Psoas muscle (tissue), 8 donors: ENCODE measurements at regions of chr2 and their contacts with region 1.

Region 1: DNA sequence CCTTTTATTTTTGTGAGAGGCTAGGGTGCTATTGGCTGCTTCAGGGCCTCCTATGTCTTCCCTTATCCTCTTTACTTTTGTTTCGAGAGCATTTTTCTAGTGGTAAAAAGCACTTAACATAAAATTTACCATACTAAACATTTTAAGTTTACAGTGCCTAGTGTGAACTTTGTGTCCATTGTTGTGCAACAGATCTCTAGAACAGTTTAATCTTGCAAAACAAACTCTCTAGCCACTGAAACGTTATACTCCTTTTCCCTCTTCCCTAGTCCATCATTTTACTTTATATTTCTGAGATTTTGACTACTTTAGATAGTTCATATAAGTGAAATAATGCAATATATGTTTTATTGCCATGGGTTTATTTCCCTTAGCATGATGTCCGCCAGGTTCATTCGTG is 580.6 kb downstream of the THSD7B start:
- DNase-seq: no peak
- ATAC-seq: no peak
- H3K4me3 ChIP-seq: no peak overlapping the region
- H3K27ac ChIP-seq: no peak overlapping the region
- H3K4me1 ChIP-seq: no peaks in the 10 kb centered on the region
- H3K27me3 ChIP-seq: no peaks in the 10 kb centered on the region
- CTCF ChIP-seq: no peak

Region 2: GRCh38 chr2:137357634-137358033 is 11.6 kb after region 1 on chr2:
- intact Hi-C with region 1: loop called in 1 of 2 experiments (anchors 2 kb)
- DNase-seq: no peak
- ATAC-seq: no peak
- H3K4me3 ChIP-seq: no peak overlapping the region
- H3K27ac ChIP-seq: no peak overlapping the region
- H3K4me1 ChIP-seq: no peaks in the 10 kb centered on the region
- H3K27me3 ChIP-seq: no peaks in the 10 kb centered on the region
- CTCF ChIP-seq: no peak

Region 3: DNA sequence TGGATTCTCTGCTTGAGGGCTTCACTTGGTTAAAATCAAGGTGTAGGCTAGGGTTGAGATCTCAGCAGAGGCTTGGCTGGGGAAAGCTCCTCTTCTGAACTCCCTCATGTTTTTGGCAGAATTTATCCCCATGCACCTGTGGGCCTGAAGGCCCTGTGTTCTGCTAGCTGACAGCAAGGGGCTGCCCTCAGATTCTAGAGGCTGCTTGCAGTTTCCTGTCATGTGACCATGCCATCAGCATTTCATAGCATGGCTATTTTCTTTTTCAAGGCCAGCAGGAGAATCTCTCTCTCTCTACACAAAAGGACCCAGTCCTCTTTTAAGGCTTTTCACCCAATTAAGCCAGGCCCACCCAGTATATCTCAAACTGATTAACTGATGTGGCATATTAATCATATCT is 103.5 kb after region 1 on chr2:
- intact Hi-C with region 1: no loop called
- DNase-seq: no peak
- ATAC-seq: no peak
- H3K4me3 ChIP-seq: no peak overlapping the region
- H3K27ac ChIP-seq: no peak overlapping the region
- H3K4me1 ChIP-seq: no peaks in the 10 kb centered on the region
- H3K27me3 ChIP-seq: no peaks in the 10 kb centered on the region
- CTCF ChIP-seq: no peak

Region 4: GRCh38 chr2:137797641-137798040 is 451.6 kb after region 1 on chr2:
- intact Hi-C with region 1: no loop called
- DNase-seq: no peak
- ATAC-seq: no peak
- H3K4me3 ChIP-seq: no peak overlapping the region
- H3K27ac ChIP-seq: no peak overlapping the region
- H3K4me1 ChIP-seq: no peaks in the 10 kb centered on the region
- H3K27me3 ChIP-seq: no peaks in the 10 kb centered on the region
- CTCF ChIP-seq: no peak